ENCODE measurements at regions of chr3 and their contacts with region 1.

Region 1: DNA sequence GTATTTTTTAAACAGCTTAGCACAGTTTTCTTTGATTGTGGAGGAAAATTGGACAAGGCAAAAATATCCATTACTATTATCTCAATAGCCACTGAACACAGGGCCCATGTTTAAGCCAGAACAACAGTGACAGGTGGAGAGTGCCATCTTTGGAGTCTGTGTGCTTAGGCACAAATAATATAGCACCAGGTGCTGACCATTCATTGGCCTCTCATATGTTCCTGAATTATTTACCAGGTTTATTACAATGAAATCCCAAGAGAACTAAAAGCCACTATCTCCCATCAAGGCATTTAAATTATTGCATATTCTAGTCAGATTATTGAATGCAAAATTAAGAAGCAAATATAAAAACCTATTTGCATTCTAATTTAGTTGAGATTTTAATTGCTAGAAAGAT is 39.6 kb downstream of the GPR156 start:
- DNase-seq: no peak
- ATAC-seq: no peak
- H3K4me3 Mint-ChIP-seq: no peak overlapping the region
- H3K27ac Mint-ChIP-seq: no peak overlapping the region
- H3K4me1 Mint-ChIP-seq: no peaks in the 10 kb centered on the region
- H3K27me3 Mint-ChIP-seq: peaks cover 22% of the 10 kb centered on the region
- CTCF ChIP-seq: no peak

Region 2: DNA sequence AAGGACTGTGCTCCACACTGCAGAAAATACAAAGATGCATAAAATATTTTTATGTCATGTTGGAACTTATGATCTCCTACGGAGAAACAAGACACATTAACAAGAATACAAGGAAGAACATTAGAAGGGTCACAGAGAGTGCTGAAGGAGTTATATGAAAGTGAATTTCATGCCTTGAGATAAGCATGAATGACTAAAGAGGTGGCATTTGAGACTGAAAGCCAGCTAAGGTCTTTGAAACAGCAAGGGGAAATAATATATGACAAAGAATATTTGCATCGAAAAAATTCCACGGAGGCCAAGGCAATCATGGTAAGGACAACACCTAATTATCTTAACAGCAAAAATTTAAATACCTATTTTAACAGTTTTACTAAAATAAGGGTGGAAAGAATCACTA is 163.7 kb before region 1 on chr3:
- CTCF ChIA-PET with region 1: no interaction called
- POLR2A ChIA-PET with region 1: no interaction called
- intact Hi-C with region 1: no loop called
- DNase-seq: no peak
- ATAC-seq: no peak
- H3K4me3 Mint-ChIP-seq: no peak overlapping the region
- H3K27ac Mint-ChIP-seq: no peak overlapping the region
- H3K4me1 Mint-ChIP-seq: peaks cover 40% of the 10 kb centered on the region
- H3K27me3 Mint-ChIP-seq: no peaks in the 10 kb centered on the region
- CTCF ChIP-seq: no peak

Region 3: DNA sequence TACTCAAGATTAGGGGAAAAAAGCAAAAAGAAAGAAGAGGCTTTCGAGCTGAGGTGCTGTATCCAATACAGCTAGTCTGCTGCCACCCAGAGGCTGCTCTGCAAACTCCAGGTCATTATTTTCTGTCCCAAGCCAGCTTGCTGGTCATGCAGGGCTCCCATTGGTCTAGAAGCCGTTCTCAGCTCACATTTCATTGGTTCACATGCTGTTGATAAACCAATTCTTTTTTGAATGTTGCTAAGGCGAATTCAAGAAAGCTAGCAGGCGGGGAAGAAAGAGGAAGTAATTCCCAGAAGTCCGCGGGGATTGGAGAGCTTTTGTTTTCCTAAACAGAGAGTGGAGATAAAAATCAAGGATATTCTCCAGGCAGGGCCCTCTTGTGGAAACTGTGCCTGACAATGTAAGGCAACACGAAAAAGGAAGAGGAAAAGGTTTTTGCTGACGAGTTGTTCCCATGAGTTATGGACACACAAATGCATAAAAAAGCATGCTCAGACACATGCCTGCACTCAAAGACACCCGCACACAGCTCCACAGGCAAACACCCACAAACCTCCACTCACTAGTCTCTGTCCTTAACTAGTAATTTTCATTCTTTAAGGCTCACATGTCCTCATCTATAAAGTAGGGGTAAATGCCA is 172.0 kb after region 1 on chr3:
- CTCF ChIA-PET with region 1: interaction called, 112 read pairs
- POLR2A ChIA-PET with region 1: no interaction called
- intact Hi-C with region 1: loop called (anchors 1 kb)
- DNase-seq: peak; percentile 61
- ATAC-seq: peak; percentile 100
- H3K4me3 Mint-ChIP-seq: peak overlapping the region; percentile 83
- H3K27ac Mint-ChIP-seq: peak overlapping the region; percentile 37
- H3K4me1 Mint-ChIP-seq: peaks cover 16% of the 10 kb centered on the region
- H3K27me3 Mint-ChIP-seq: no peaks in the 10 kb centered on the region
- CTCF ChIP-seq: no peak

Region 4: DNA sequence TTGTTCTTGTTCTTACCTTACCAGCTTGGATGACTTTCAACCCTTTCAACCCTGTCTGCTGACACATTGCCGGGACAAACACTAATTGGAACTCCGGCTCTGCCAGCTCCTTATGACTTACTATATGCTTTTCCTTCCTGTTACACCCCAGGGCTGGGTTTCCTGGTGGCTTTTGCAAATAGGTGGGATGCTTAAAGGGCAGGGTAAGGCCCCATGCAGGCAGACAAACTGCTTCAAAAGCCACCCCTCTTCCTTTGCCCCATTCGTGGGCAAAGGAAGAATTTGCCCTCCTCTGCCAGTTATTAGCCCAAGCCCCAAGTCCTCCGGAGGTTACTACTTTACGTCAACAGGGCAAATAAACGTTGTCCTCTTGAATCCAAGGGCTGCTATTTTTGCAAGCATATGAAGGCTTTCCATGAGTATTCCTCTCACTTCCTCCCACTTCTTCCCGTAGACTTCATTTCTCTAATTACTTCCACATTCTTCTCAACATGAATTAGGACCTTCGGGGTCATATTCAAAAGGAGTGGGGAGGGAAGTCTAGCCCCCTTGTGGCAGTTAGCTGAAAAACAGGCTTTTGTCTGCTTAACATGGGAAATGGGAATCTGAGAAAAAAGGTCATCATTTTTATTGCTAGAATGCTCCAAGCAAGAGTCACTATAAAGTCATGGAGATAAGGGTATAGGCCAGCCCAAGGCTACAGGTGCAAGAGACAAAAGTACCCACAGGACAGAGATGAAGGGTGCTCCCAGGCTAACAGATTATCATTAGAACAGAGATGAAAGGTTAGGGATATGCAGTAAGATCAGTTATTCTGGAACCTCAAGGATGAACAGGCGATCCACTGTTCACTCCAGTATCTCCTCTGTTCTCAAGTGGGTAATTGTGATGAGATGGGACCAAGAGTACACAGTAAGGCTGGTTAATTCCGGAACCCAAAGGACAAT is 261.7 kb after region 1 on chr3:
- CTCF ChIA-PET with region 1: interaction called, 5 read pairs
- POLR2A ChIA-PET with region 1: no interaction called
- intact Hi-C with region 1: loop called (anchors 1 kb)
- DNase-seq: no peak
- ATAC-seq: no peak
- H3K4me3 Mint-ChIP-seq: no peak overlapping the region
- H3K27ac Mint-ChIP-seq: no peak overlapping the region
- H3K4me1 Mint-ChIP-seq: no peaks in the 10 kb centered on the region
- H3K27me3 Mint-ChIP-seq: peaks cover 10% of the 10 kb centered on the region
- CTCF ChIP-seq: no peak

Region 5: DNA sequence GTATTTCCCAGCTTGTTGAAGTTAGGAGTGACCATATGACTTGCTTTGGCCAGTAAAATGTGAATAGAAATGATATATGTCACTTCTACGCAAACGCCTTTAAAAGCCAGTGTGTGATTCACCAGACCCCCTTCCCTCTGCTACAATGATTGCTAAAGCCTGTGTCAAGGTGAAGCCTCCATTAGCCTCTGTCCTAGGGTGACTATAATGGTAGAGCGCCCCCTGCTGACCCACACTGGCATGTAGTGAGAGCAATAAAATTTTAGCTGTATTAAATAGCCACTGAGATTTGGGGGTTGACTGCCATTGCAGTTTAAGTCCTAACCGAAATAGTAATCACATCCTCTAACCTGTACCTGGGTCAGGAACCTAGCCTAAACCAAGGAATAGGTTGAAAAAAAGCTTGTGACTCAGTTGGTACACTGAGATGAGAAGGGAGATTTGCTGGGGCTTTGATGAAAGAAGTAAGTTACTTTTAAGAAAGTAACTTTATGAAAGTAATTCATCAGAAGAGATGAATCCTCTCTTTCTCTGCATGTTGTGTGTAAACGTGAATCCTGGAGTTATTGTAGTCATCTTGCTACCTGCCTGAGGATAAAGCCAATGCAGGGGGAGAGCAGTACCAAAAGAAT is 549.7 kb after region 1 on chr3:
- CTCF ChIA-PET with region 1: interaction called, 3 read pairs
- POLR2A ChIA-PET with region 1: no interaction called
- intact Hi-C with region 1: loop called (anchors 1 kb)
- DNase-seq: peak; percentile 53
- ATAC-seq: peak; percentile 96
- H3K4me3 Mint-ChIP-seq: no peak overlapping the region
- H3K27ac Mint-ChIP-seq: no peak overlapping the region
- H3K4me1 Mint-ChIP-seq: no peaks in the 10 kb centered on the region
- H3K27me3 Mint-ChIP-seq: no peaks in the 10 kb centered on the region
- CTCF ChIP-seq: no peak